ENCODE measurements at regions of chr6 and their contacts with region 1.

Region 1: DNA sequence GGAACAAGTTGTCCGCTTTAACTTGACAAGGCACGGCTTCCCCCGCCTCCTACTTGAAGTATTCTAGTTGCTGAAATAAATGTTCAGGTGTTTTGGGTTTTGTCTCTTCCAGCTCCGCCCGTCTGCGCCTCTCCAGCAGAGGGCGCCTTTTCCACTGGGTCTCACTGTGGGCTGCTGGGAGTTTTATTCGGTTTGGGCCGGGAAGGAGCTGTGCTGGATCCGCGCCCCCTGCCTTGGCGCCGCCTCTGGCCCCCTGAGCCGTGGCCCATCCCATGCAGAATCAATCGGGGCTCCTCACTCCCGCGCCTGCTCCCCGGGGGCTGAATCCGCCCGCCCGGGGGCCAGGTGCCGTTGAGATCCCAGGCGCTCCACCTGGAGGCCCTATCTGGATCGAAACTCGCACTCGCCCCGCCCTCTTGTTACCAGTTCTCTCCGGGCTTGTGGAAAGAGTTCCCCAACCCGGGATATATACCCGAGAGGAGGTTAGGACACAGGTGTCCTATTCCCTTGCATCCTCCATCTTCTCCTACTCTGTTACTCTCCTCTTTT is 51.0 kb upstream of the TCF21 start:
- DNase-seq: peak; percentile 34
- H3K4me3 ChIP-seq: peak overlapping the region; percentile 7 to 24 (median 19)
- H3K27ac ChIP-seq: no peak overlapping the region
- H3K4me1 ChIP-seq: peaks cover 2% of the 10 kb centered on the region
- H3K27me3 ChIP-seq: peaks cover 2 to 5% of the 10 kb centered on the region in 2 experiments
- CTCF ChIP-seq: peak; percentile 78 to 87
- POLR2A ChIP-seq: no peak

Region 2: DNA sequence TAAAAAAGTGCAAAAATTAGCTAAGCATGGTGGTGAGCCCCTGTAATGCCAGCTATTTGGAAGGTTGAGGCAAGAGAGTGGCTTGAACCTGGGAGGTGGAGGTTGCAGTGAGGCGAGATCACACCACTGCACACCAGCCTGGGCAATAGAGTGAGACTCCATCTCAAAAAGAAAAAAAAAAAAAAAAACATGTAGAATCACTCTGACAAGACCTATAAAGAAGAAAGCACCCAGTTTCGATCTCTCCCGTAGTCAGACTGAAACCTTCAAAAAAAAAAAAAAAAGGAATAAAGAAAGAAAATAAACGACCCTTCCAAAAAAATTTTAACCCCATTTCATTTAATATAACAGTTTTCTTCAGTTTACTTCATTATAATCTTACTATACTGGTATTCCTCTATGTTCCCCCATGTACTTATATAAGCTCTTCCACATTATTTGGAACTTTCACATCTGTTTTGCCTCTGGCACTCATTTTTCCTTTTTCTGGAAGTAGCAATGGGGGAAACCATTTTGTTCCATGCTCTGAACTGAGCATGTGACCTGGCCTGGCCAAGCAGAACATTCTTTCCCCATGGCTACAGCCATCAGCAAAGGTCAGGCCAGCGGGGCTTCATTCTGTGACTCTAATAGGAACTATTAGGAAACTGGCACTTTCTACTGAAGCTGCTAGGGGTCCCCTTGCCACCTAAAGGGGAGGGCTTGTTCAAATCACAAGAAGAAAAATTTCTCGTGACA is 1049.0 kb before region 1 on chr6:
- CTCF ChIA-PET with region 1: no interaction called
- POLR2A ChIA-PET with region 1: no interaction called
- dilution Hi-C with region 1: no loop called
- intact Hi-C with region 1: no loop called
- DNase-seq: no peak
- H3K4me3 ChIP-seq: no peak overlapping the region
- H3K27ac ChIP-seq: no peak overlapping the region
- H3K4me1 ChIP-seq: peaks cover 20% of the 10 kb centered on the region
- H3K27me3 ChIP-seq: no peaks in the 10 kb centered on the region
- CTCF ChIP-seq: no peak
- POLR2A ChIP-seq: no peak

Region 3: DNA sequence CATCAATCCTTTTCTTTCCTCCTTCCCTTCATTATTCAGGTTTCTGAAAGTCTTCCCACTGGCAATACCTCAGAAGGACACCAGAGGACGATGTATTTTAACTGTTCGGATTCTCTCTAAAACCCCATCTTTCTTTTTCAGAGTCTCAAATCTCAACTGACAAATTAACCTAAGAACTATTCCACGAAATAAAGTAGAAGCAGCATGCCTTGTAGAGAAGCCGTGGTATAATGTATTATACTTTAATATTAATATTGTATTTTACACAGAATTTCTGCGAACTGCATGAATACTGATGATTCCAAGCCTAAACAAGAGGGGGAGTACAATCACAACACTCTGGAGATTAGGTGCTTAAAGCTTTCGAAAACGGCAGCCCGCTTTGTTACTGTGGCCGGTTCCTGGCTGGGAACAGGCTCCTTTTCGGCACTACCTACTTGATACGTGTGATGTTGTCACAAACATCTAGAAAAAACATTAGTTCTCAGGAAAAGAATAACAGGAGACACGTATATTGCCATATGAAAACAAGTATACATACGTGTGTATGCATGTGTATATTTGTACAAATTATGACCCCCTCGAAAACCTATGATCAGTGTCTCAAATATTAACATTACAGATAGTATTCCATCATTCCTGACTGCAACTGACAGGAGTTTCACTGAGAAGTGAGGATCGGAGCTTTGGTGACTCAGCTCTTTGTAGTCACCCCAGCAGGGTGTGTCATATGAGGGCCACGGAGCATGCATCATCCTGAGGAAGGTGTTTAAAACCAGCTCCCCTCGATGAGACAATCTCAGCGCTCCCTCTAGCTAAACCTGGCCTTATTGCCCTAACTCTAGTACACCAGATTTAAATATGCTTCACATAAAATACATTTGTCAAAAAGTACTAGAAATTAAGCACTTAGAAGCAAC is 268.6 kb before region 1 on chr6:
- CTCF ChIA-PET with region 1: interaction called, 18 read pairs
- POLR2A ChIA-PET with region 1: no interaction called
- dilution Hi-C with region 1: no loop called
- intact Hi-C with region 1: loop called (anchors 5 kb)
- DNase-seq: peak; percentile 56
- H3K4me3 ChIP-seq: peak overlapping the region in 2 of 3 experiments; percentile 29 to 49
- H3K27ac ChIP-seq: no peak overlapping the region
- H3K4me1 ChIP-seq: peaks cover 5% of the 10 kb centered on the region
- H3K27me3 ChIP-seq: peaks cover 3 to 6% of the 10 kb centered on the region in 2 experiments
- CTCF ChIP-seq: peak; percentile 67 to 74
- POLR2A ChIP-seq: no peak

Region 4: GRCh38 chr6:133809406-133809805 is 28.5 kb before region 1 on chr6:
- CTCF ChIA-PET with region 1: interaction called, 11 read pairs
- POLR2A ChIA-PET with region 1: no interaction called
- dilution Hi-C with region 1: no loop called
- intact Hi-C with region 1: no loop called
- DNase-seq: no peak
- H3K4me3 ChIP-seq: no peak overlapping the region
- H3K27ac ChIP-seq: no peak overlapping the region
- H3K4me1 ChIP-seq: no peaks in the 10 kb centered on the region
- H3K27me3 ChIP-seq: no peaks in the 10 kb centered on the region
- CTCF ChIP-seq: no peak
- POLR2A ChIP-seq: no peak

Region 5: DNA sequence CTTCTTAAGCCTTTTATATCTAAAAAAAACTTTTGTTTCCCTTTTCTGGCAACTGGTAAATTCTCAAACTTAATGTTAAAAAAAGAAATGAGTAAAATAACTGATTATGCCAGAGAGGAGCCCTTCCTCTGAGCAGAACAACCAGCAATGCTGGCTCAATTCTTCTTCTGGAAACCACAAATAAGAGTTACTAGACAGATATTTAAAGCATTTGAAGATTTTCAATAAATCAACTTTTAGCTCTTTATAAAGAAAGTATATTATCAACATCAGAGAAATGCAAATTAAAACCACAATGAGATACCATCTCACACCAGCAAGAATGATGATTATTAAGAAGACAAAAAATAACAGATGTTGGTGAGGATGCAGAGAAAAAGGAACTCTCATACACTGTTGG is 10.1 kb before region 1 on chr6:
- CTCF ChIA-PET with region 1: interaction called, 13 read pairs
- POLR2A ChIA-PET with region 1: no interaction called
- dilution Hi-C with region 1: no loop called
- intact Hi-C with region 1: no loop called
- DNase-seq: no peak
- H3K4me3 ChIP-seq: no peak overlapping the region
- H3K27ac ChIP-seq: no peak overlapping the region
- H3K4me1 ChIP-seq: no peaks in the 10 kb centered on the region
- H3K27me3 ChIP-seq: peaks cover 0 to 2% of the 10 kb centered on the region in 2 experiments
- CTCF ChIP-seq: no peak
- POLR2A ChIP-seq: no peak

Region 6: GRCh38 chr6:133854364-133855275 is 16.7 kb after region 1 on chr6:
- CTCF ChIA-PET with region 1: interaction called, 11 read pairs
- POLR2A ChIA-PET with region 1: no interaction called
- dilution Hi-C with region 1: no loop called
- intact Hi-C with region 1: no loop called
- DNase-seq: no peak
- H3K4me3 ChIP-seq: no peak overlapping the region
- H3K27ac ChIP-seq: no peak overlapping the region
- H3K4me1 ChIP-seq: no peaks in the 10 kb centered on the region
- H3K27me3 ChIP-seq: peaks cover 35 to 48% of the 10 kb centered on the region in 2 experiments
- CTCF ChIP-seq: peak in 1 of 2 donors; percentile 8
- POLR2A ChIP-seq: no peak

Measured in endothelial cell of umbilical vein (primary cell).